ENCODE measurements at regions of chr3 and their contacts with region 1.

Region 1: DNA sequence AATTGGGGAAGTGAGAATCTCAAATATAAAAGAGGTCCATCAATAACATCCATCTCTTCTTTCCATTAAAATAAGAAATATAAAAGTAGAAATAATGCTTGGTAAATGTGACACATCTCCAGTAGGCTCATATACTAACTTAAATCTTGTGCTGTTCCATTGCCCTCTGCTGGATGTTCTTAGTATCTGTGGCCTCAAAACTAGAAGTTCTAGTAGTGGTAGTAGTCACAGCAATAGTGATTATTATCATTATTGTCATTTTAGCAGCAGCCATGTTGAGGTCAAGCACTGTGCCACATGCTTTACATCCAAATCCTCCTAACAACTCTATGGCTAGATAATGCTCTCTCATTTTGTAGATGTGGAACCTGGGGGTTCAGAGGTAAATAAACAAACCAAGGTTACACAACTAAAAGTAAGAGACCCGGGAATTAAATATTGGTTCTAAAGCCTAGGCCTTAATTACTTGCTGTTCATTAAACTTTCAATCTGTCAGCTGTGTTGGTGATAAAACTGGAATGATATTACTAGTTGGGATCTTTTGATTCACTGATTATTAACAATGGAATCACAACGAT is 20.2 kb upstream of the BTLA start:
- DNase-seq: peak; percentile 68
- ATAC-seq: peak; percentile 83
- H3K4me3 ChIP-seq: no peak overlapping the region
- H3K27ac ChIP-seq: peak overlapping the region; percentile 54
- H3K4me1 ChIP-seq: peaks cover 4% of the 10 kb centered on the region; the same call in 1 of the 2 replicates
- H3K27me3 ChIP-seq: no peaks in the 10 kb centered on the region
- CTCF ChIP-seq: peak; percentile 68 to 72 (median 70)
- EP300 ChIP-seq: no peak
- POLR2A ChIP-seq: no peak
- RAD21 ChIP-seq: peak; percentile 92

Region 2: DNA sequence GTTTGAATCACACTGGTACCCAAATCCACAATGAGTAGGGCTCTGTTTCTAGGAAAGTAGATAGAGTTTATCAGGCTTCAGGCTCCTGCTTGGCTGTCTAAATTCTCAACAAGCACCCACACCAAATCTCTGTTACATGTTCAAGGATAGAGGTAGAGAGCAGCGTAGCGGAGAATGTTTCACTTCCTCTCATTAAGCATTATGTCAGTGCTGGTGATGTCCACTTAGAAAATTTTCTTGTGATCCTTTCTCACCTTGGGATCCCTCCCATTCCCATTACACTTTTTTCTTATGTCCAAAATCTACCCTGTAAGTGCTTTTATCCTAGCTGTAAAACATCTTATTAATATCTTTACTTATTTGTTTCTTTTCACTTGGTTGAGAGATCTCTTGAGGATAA is 351.8 kb before region 1 on chr3:
- CTCF ChIA-PET with region 1: no interaction called
- POLR2A ChIA-PET with region 1: no interaction called
- RAD21 ChIA-PET with region 1: no interaction called
- SMC1A ChIA-PET with region 1: no interaction called
- in situ Hi-C with region 1: no loop called
- intact Hi-C with region 1: no loop called
- DNase-seq: peak; percentile 27
- ATAC-seq: peak; percentile 97
- H3K4me3 ChIP-seq: no peak overlapping the region
- H3K27ac ChIP-seq: no peak overlapping the region
- H3K4me1 ChIP-seq: no peaks in the 10 kb centered on the region
- H3K27me3 ChIP-seq: no peaks in the 10 kb centered on the region
- CTCF ChIP-seq: no peak
- EP300 ChIP-seq: peak; percentile 24 to 57; a peak in 2 of 4 replicates
- POLR2A ChIP-seq: no peak
- RAD21 ChIP-seq: no peak

Region 3: DNA sequence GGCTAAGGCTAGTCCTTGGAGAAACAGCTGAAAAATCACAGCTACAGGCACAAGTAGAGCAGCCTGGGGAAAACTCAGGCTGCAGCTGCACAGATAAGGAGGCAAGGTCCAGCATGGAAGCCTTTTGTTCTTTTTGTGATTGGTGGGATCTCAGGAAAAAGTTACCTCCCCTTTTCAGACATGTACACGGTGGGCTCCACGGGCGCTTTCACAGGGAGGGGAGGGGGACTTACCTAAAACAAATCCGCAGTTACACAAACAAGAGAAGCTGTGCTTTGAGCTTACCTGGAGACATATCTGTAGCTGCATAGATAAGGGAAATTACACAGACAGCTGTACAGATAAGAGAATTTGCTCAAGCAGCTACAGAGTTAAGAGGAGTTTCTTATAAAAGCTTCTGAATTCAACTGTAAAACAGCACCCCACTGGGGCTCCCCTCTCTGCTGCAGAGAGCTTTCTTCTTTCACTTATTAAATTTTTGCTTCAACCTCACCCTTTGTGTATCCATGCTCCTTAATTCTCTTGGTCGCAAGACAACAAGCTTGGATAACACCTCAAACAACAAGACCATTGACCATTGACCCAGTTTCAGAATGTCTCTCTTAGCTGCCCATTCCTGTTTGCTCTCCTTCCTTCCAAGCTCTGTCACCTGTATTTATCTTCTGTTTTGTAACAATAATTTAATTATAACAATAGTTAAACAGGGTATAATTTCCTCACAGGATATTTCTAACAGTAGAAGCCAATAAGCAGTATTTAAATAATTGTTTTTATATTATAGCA is 197.5 kb before region 1 on chr3:
- CTCF ChIA-PET with region 1: interaction called, 31 read pairs
- POLR2A ChIA-PET with region 1: interaction called, 4 read pairs
- RAD21 ChIA-PET with region 1: interaction called, 5 read pairs
- SMC1A ChIA-PET with region 1: interaction called, 60 read pairs
- in situ Hi-C with region 1: loop called (anchors 5 kb)
- intact Hi-C with region 1: loop called (anchors 1 kb)
- DNase-seq: no peak
- ATAC-seq: no peak
- H3K4me3 ChIP-seq: no peak overlapping the region
- H3K27ac ChIP-seq: no peak overlapping the region
- H3K4me1 ChIP-seq: no peaks in the 10 kb centered on the region
- H3K27me3 ChIP-seq: no peaks in the 10 kb centered on the region
- CTCF ChIP-seq: no peak
- EP300 ChIP-seq: no peak
- POLR2A ChIP-seq: no peak
- RAD21 ChIP-seq: no peak

Region 4: DNA sequence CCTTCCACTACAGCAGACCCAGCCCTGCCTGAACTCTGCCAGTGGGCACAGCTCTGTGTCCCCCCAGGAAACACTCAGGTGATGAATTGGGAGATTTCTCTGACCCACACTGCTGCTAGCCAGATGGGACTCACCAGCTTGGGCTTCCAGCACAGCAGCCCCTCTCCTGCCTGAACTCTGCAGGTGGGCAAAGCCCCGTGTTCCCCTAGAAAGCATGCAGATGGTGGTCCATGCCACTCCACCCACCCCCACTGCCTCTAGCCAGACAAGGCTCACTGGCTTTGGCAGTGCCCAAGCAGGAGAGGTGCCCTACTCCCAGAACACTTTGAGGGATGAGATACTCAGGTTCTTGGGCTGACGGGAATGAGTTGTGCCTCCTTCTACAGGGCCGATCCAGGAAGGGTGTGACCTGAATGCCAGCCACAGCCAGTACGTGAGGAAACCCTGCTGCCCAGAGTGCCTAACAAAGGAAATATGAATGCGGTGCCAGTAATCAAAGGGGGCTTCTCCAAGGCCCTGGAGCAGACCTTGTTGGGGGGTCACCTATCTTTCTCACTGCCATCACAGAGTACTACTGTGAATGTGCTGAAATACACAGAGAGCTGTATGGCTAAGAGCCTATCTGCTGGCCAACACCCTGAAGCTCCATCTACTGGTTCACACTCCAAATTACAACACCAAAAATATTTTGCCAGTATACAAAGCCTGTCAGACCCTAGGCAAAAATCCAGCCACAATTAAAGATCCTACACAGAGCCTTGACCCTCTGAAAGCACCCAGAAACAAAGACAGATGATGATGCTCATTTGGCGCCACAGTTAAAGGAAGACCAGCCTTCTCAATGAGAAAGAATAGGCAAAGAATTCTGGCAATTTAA is 82.1 kb before region 1 on chr3:
- CTCF ChIA-PET with region 1: interaction called, 3 read pairs
- POLR2A ChIA-PET with region 1: no interaction called
- RAD21 ChIA-PET with region 1: interaction called, 3 read pairs
- SMC1A ChIA-PET with region 1: interaction called, 4 read pairs
- in situ Hi-C with region 1: no loop called
- intact Hi-C with region 1: loop called (anchors 5 kb)
- DNase-seq: no peak
- ATAC-seq: peak; percentile 79
- H3K4me3 ChIP-seq: no peak overlapping the region
- H3K27ac ChIP-seq: no peak overlapping the region
- H3K4me1 ChIP-seq: peaks cover 5% of the 10 kb centered on the region
- H3K27me3 ChIP-seq: no peaks in the 10 kb centered on the region
- CTCF ChIP-seq: peak; percentile 22 to 62 (median 28); a peak in 4 of 6 replicates
- EP300 ChIP-seq: no peak
- POLR2A ChIP-seq: no peak
- RAD21 ChIP-seq: peak; percentile 84

Region 5: DNA sequence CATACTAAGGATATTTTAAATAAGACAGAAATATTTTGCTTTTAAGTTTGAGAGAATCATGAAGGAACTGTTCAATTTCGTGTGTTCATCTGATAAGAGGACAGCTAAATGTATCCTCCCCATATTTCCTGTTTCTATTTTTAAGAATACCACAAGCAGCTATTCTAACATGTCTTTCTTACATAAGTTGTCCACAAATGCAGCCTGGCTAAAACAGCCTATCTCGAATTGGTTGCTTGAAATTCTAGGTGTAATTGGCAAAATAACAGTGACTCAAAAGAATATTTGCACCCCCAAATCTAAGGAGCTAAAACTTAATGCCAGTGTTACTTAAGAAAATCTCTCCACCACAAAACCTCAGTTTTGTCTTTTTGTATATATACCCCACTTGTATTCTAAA is 55.2 kb before region 1 on chr3:
- CTCF ChIA-PET with region 1: interaction called, 5 read pairs
- POLR2A ChIA-PET with region 1: interaction called, 3 read pairs
- RAD21 ChIA-PET with region 1: interaction called, 13 read pairs
- SMC1A ChIA-PET with region 1: interaction called, 39 read pairs
- in situ Hi-C with region 1: no loop called
- intact Hi-C with region 1: loop called (anchors 1 kb)
- DNase-seq: peak; percentile 67
- ATAC-seq: peak; percentile 45
- H3K4me3 ChIP-seq: peak overlapping the region; percentile 16; the same call in 1 of the 2 replicates
- H3K27ac ChIP-seq: peak overlapping the region; percentile 77
- H3K4me1 ChIP-seq: peaks cover 61% of the 10 kb centered on the region
- H3K27me3 ChIP-seq: no peaks in the 10 kb centered on the region
- CTCF ChIP-seq: no peak
- EP300 ChIP-seq: peak; percentile 10 to 78; a peak in 2 of 4 replicates
- POLR2A ChIP-seq: no peak
- RAD21 ChIP-seq: no peak

Region 6: GRCh38 chr3:112489674-112490479 is 29.6 kb before region 1 on chr3:
- CTCF ChIA-PET with region 1: interaction called, 10 read pairs
- POLR2A ChIA-PET with region 1: interaction called, 4 read pairs
- RAD21 ChIA-PET with region 1: interaction called, 18 read pairs
- SMC1A ChIA-PET with region 1: interaction called, 143 read pairs
- in situ Hi-C with region 1: no loop called
- intact Hi-C with region 1: loop called (anchors 2 kb)
- DNase-seq: peak; percentile 75
- ATAC-seq: peak; percentile 61
- H3K4me3 ChIP-seq: peak overlapping the region; percentile 51
- H3K27ac ChIP-seq: peak overlapping the region; percentile 97
- H3K4me1 ChIP-seq: peaks cover 13% of the 10 kb centered on the region; the same call in 1 of the 2 replicates
- H3K27me3 ChIP-seq: no peaks in the 10 kb centered on the region
- CTCF ChIP-seq: no peak
- EP300 ChIP-seq: peak in 1 of 2 experiments; percentile 27; a peak in 1 of 4 replicates
- POLR2A ChIP-seq: no peak
- RAD21 ChIP-seq: 0 out of 2 replicates have a peak, but pooled peaks have one; percentile 22

Region 7: DNA sequence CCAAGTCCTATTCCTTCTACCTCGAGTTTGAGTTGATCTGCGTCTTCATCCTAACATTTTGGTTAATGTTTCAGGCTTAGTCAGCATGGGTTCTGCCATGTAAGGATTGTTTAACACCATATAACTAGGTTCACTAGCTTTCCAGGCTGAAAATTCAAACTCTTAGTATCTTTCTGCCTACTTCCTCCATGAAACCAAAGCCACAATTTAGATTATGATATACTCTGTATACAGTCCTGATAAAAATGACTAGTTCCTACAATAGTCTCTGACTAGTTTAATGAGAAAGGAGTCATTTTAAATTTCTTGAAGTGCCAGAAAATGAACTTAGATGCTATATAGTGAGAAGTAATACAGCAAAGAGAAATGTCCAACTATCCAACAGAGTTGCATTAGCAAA is 13.6 kb before region 1 on chr3:
- CTCF ChIA-PET with region 1: interaction called, 13 read pairs
- POLR2A ChIA-PET with region 1: interaction called, 51 read pairs
- RAD21 ChIA-PET with region 1: interaction called, 64 read pairs
- SMC1A ChIA-PET with region 1: interaction called, 143 read pairs
- in situ Hi-C with region 1: no loop called
- intact Hi-C with region 1: no loop called
- DNase-seq: no peak
- ATAC-seq: peak; percentile 61
- H3K4me3 ChIP-seq: no peak overlapping the region
- H3K27ac ChIP-seq: peak overlapping the region; percentile 46
- H3K4me1 ChIP-seq: peaks cover 32% of the 10 kb centered on the region
- H3K27me3 ChIP-seq: no peaks in the 10 kb centered on the region
- CTCF ChIP-seq: no peak
- EP300 ChIP-seq: no peak
- POLR2A ChIP-seq: no peak
- RAD21 ChIP-seq: no peak

Region 8: DNA sequence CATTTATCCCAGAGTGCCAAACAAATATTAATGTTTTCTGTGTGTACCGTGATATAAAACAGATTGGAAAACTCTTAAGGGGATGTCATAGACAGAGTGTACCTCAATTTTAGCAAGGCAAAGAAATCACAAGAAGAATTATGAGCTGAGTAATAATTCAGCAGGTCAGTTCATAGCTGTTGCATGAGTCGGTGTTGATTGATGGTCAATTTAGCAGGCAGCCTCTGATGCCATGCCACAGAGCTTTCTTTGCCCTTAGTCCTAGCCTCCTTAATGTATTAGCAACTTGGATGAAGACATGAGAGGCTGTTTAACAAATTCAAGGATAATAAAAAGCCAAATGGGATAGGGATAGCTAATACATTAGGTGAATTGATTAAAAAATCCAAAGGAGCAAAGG is 49.1 kb after region 1 on chr3:
- CTCF ChIA-PET with region 1: no interaction called
- POLR2A ChIA-PET with region 1: no interaction called
- RAD21 ChIA-PET with region 1: no interaction called
- SMC1A ChIA-PET with region 1: no interaction called
- in situ Hi-C with region 1: no loop called
- intact Hi-C with region 1: no loop called
- DNase-seq: no peak
- ATAC-seq: no peak
- H3K4me3 ChIP-seq: no peak overlapping the region
- H3K27ac ChIP-seq: no peak overlapping the region
- H3K4me1 ChIP-seq: no peaks in the 10 kb centered on the region
- H3K27me3 ChIP-seq: no peaks in the 10 kb centered on the region
- CTCF ChIP-seq: no peak
- EP300 ChIP-seq: no peak
- POLR2A ChIP-seq: no peak
- RAD21 ChIP-seq: no peak

Region 9: GRCh38 chr3:112931736-112932521 is 412.4 kb after region 1 on chr3:
- CTCF ChIA-PET with region 1: no interaction called
- POLR2A ChIA-PET with region 1: no interaction called
- RAD21 ChIA-PET with region 1: no interaction called
- SMC1A ChIA-PET with region 1: no interaction called
- in situ Hi-C with region 1: no loop called
- intact Hi-C with region 1: no loop called
- DNase-seq: no peak
- ATAC-seq: no peak
- H3K4me3 ChIP-seq: no peak overlapping the region
- H3K27ac ChIP-seq: no peak overlapping the region
- H3K4me1 ChIP-seq: no peaks in the 10 kb centered on the region
- H3K27me3 ChIP-seq: no peaks in the 10 kb centered on the region
- CTCF ChIP-seq: no peak
- EP300 ChIP-seq: no peak
- POLR2A ChIP-seq: no peak
- RAD21 ChIP-seq: no peak

Measured in GM12878 (cell line).